ENCODE measurements at regions of chr11 and their contacts with region 1.

Region 1: GRCh38 chr11:130904380-130904779 is 11.9 kb downstream of the SNX19 start:
- H3K4me3 ChIP-seq: no peak overlapping the region
- H3K27ac ChIP-seq: no peak overlapping the region
- H3K4me1 ChIP-seq: no peaks in the 10 kb centered on the region
- CTCF ChIP-seq: no peak

Region 2: DNA sequence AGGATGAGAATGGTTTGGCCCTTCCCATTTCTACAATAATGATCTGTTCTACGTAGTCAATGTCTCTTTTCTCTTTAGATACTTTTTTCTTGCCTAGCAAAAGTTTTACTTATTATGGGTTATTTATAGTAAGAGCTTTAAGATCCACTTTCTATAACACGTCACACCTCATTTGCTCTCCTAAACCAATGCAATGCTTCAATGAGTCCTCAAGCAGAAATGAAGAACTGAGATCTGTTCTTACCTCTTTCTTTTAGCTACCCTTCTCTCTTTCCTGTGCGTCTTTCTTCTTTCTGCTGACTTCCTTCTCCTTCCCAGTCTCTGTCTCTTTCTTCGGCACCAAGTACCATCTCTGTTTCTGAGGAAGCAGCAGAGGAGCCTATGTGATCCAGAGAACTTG is 49.9 kb before region 1 on chr11:
- CTCF ChIA-PET with region 1: no interaction called
- POLR2A ChIA-PET with region 1: no interaction called
- H3K4me3 ChIP-seq: no peak overlapping the region
- H3K27ac ChIP-seq: no peak overlapping the region
- H3K4me1 ChIP-seq: no peaks in the 10 kb centered on the region
- CTCF ChIP-seq: no peak

Region 3: DNA sequence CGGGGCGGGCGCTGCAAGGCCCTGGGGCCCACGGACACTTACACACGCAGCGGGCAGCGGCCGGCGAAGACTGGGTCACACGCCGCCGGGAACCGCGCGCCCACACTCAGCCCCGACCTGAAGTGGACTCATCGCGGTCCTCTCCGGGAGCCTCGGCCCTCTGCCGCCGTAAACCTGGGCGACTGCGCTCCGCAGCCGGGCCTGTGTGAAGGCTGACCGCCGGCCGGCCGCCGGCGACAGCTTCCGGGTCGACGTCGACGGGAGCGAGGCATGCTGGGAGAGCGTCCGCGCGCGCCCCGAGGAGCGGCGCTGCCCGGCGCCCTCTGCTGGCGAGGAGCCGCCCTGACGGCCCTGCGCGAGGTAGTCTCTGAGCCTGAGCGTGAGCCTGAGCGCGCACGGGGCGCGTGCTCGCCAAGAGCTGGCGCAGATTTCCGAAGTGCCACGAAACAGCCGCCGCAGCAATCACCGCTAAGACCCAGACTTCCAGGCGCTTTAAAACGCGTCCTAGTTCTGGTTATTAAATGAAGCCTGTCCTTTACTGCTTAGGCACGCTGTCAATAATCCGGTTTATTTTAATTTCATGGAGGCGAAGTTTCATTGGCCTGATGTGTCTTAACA is 12.0 kb after region 1 on chr11 and contains the start of gene SNX19:
- CTCF ChIA-PET with region 1: interaction called, 18 read pairs
- POLR2A ChIA-PET with region 1: interaction called, 4 read pairs
- H3K4me3 ChIP-seq: peak within 1 kb of the TSS; percentile 87
- H3K27ac ChIP-seq: peak within 1 kb of the TSS; percentile 54; the same call in 1 of the 2 replicates
- H3K4me1 ChIP-seq: no peaks in the 10 kb centered on the region
- CTCF ChIP-seq: peak; percentile 85

Measured in HEK293 (cell line).